Dorsolateral prefrontal cortex (tissue), 120 donors: ENCODE measurements at regions of chr5 and their contacts with region 1.

Region 1: GRCh38 chr5:132866342-132867045 is at the starts of genes GDF9 and UQCRQ:
- DNase-seq: peak; percentile 90 to 98 (median 98)
- H3K4me3 ChIP-seq: peak within 1 kb of the TSS; percentile 69 to 100 (median 93)
- H3K27ac ChIP-seq: peak within 1 kb of the TSS; percentile 82 to 99 (median 97)
- H3K27me3 ChIP-seq: no peaks in the 10 kb centered on the region
- CTCF ChIP-seq: peak in 54 of 56 donors; percentile 33 to 80 (median 55)
- total RNA-seq, gene GDF9: 0.34 to 3.8 (median 1.4) TPM
- total RNA-seq, gene UQCRQ: 166 to 403 (median 290) TPM

Region 2: DNA sequence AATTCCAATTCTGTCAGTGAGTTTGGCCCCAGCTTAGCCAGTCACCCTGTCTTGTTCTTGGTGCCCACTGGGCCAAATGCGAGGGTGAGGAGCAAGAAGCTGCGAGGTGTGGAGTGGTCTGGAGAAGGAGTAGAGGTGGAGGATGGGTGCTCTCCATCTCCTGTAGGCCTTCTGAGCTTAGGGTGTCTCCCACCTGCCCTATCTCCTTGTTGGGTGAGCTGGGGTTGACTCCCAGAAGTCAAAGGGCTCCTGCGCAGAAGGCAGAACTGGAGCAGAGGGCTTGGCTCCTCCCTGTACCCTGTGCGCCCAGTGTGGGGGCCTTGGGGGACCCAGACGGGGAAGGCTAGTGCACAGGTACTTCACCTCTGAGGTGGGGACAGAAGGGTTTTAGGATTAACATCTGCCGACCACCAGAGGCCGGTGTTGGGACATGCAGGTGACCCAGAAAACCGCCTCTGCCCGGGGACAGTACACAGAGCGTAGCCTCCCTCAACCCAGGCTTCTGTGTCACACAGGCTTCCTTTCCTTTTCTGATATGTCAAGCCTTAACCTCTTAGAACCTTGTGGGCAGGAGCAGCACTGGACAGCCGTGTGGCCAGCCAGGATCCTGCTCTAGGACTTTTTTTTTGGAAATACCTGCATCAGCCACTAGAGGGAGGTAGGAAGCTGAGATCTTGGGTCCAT is 340.1 kb before region 1 on chr5:
- intact Hi-C with region 1: loop called (anchors 10 kb)
- DNase-seq: peak in 1 of 10 donors; percentile 31
- H3K4me3 ChIP-seq: peak overlapping the region in 4 of 59 donors; percentile 4 to 23 (median 10)
- H3K27ac ChIP-seq: no peak overlapping the region
- H3K27me3 ChIP-seq: no peaks in the 10 kb centered on the region
- CTCF ChIP-seq: peak; percentile 62 to 93 (median 84)

Region 3: DNA sequence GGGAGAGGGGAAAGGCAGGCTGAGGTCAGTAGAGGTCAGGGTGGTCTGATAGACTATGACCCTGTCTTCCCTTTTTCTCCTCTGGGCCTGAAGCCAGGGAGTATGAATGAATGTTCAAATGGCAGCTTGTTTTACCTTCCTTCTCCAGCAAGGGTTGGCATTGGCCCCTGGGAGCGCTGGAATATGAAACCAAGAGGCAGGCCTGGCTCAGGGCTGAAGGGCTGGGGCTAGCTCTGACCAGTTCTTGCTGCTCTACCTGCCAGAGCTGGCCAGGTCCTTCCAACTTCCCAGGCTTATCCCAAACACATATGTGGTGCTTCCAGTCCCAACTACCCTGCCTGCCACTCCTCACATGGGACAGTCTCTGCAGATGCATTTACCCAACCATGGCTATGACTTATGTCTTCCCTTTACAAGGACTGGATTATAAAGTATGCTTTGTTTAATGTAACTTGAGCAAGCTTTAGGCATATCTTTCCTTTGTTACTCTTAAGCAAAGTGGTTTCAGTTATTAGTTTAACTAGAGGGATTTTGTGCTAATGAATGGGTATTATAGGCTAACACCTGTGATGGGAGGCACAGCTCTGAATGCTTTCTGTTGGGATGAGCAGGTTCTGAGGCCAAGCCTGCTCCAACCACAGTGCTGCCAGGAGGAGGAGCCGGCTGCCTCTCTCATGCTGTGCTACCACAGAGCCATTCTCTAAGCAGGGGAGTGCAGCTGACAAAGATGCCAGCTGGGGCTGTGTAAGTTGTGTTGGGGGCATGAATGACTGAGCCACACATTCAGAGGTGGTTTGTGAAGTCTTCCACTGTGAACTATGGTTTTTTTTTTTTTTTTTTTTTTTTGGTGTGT is 113.1 kb before region 1 on chr5:
- intact Hi-C with region 1: loop called in 1 of 2 experiments (anchors 5 kb)
- DNase-seq: peak in 9 of 10 donors; percentile 67 to 87 (median 81)
- H3K4me3 ChIP-seq: no peak overlapping the region
- H3K27ac ChIP-seq: peak overlapping the region in 58 of 59 donors; percentile 27 to 94 (median 82)
- H3K27me3 ChIP-seq: no peaks in the 10 kb centered on the region
- CTCF ChIP-seq: peak in 50 of 56 donors; percentile 22 to 71 (median 48)

Region 4: GRCh38 chr5:132820162-132820754 is 46.2 kb before region 1 on chr5:
- intact Hi-C with region 1: loop called in 1 of 2 experiments (anchors 2 kb)
- DNase-seq: peak; percentile 92 to 99 (median 96)
- H3K4me3 ChIP-seq: peak overlapping the region in 54 of 59 donors; percentile 0 to 59 (median 41)
- H3K27ac ChIP-seq: peak overlapping the region; percentile 81 to 100 (median 97)
- H3K27me3 ChIP-seq: no peaks in the 10 kb centered on the region
- CTCF ChIP-seq: peak; percentile 86 to 99 (median 95)

Region 5: GRCh38 chr5:132963175-132964104 is 96.9 kb after region 1 on chr5 and contains the start of gene AFF4:
- intact Hi-C with region 1: loop called (anchors 1 to 5 kb)
- DNase-seq: peak; percentile 94 to 98 (median 96)
- H3K4me3 ChIP-seq: peak within 1 kb of the TSS; percentile 50 to 100 (median 96)
- H3K27ac ChIP-seq: peak within 1 kb of the TSS; percentile 89 to 100 (median 99)
- H3K27me3 ChIP-seq: no peaks in the 10 kb centered on the region
- CTCF ChIP-seq: peak in 28 of 56 donors; percentile 2 to 52 (median 21)
- total RNA-seq, gene AFF4: 68.0 to 123 (median 95.9) TPM

Region 6: GRCh38 chr5:133051580-133052332 is 185.3 kb after region 1 on chr5 and contains the start of gene HSPA4:
- intact Hi-C with region 1: loop called in 1 of 2 experiments (anchors 10 kb)
- DNase-seq: peak; percentile 96 to 99 (median 98)
- H3K4me3 ChIP-seq: peak within 1 kb of the TSS; percentile 72 to 100 (median 98)
- H3K27ac ChIP-seq: peak within 1 kb of the TSS; percentile 96 to 100 (median 100)
- H3K27me3 ChIP-seq: no peaks in the 10 kb centered on the region
- CTCF ChIP-seq: peak in 15 of 56 donors; percentile 3 to 38 (median 13)
- total RNA-seq, gene HSPA4: 61.6 to 183 (median 97.3) TPM